ENCODE measurements at regions of chr20 and their contacts with region 1.

Region 1: DNA sequence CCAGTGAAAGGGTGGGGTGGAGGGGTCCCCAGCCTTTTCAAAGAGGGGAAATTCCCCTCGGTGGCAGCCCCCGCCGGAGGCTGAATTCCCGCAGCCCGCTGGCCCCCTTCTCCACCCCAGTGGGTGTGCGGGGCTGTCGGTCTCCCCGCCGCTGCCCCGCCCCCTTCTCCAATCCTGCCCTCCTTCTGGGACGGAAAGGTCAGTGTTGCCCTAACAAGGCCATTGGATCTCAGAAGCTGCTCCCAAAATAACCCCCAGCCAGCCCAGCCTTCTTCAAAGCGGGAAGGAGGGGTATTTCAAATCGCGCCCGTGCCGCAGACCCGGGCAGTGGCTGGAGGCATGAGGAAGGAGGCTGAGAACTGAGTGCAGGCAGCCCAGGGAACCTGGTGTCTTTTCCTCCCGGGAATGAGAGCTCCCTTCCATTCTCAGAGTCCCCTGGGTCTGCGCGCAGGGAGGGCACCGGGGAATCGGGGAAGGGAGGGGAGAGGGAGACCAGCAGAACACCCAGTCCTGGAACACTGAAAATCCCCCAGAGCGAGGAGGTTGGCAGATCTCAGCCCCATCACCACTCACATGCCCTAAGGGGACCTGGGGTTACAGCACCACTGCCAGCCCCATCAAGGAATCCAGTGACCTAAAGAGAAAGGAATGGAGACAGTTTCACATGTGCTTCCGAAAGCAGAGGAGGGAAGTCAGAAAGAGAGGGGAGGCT is at the start of gene JPH2:
- DNase-seq: no peak

Region 2: GRCh38 chr20:44109951-44110361 is 77.3 kb before region 1 on chr20:
- CTCF ChIA-PET with region 1: interaction called, 21 read pairs
- POLR2A ChIA-PET with region 1: no interaction called
- DNase-seq: no peak

Region 3: DNA sequence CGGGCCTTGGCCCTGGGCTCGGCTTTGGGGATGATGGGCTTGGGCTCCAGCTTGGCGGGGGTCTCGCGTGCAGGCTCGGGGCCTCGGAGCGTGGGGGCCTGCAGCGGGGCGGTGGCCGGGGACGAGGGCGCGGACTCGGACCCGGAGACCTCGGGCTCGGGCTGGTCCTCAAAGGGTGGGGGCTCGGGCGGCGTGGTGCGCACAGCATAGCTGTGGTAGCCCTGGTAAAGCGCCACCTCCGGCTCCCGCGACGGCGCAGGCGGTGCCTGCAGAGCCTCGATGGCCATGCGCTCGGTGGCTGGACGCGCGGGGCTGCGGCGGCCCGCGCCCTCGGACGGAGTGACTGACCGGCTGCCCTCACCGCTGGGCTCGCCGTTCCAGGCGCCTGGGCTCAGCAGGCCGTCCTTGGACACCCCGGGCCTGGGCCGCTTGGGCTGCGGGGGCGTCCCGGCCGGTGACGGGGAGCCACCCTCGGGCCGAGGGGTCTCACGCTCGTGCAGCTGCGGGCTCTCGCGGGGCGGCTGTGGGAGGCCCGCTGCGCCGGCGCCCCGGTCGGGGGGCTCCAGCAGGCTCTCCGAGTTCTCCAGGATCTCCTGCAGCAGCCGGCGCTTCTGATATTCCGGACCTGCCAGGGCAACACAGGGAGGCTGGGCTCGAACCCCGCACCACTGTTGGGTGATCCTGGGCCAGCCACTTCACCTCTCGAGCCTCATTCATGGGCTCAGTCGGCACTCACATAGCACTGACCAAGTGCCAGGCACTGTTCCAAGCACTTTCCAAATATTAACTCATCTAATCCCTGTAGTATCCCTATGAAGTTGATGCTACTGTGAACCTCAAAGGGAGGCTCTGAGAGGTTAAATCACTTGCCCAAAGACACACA is 71.2 kb before region 1 on chr20:
- CTCF ChIA-PET with region 1: interaction called, 44 read pairs
- POLR2A ChIA-PET with region 1: no interaction called
- DNase-seq: no peak